Naive thymus-derived CD4-positive, alpha-beta T cell (primary cell): ENCODE measurements at regions of chr10 and their contacts with region 1.

Region 1: GRCh38 chr10:96586419-96587263 is at the start of gene TM9SF3:
- DNase-seq: peak; percentile 86 to 91 (median 89)
- ATAC-seq: peak; percentile 93
- H3K4me3 ChIP-seq: peak within 1 kb of the TSS; percentile 83
- H3K4me3 Mint-ChIP-seq: peak within 1 kb of the TSS in 8 of 10 donors; percentile 82 to 97 (median 92)
- H3K27ac ChIP-seq: peak within 1 kb of the TSS; percentile 100
- H3K27ac Mint-ChIP-seq: peak within 1 kb of the TSS in 8 of 9 donors; percentile 89 to 99 (median 95)
- H3K4me1 ChIP-seq: peaks cover 28 to 32% of the 10 kb centered on the region in 2 donors
- H3K4me1 Mint-ChIP-seq: peaks cover 26 to 47% (median 40%) of the 10 kb centered on the region in 7 donors
- H3K27me3 ChIP-seq: no peaks in the 10 kb centered on the region
- H3K27me3 Mint-ChIP-seq: peaks cover 0 to 13% (median 0%) of the 10 kb centered on the region in 5 donors
- total RNA-seq, gene TM9SF3: 76.7 to 94.0 (median 83.5) TPM

Region 2: DNA sequence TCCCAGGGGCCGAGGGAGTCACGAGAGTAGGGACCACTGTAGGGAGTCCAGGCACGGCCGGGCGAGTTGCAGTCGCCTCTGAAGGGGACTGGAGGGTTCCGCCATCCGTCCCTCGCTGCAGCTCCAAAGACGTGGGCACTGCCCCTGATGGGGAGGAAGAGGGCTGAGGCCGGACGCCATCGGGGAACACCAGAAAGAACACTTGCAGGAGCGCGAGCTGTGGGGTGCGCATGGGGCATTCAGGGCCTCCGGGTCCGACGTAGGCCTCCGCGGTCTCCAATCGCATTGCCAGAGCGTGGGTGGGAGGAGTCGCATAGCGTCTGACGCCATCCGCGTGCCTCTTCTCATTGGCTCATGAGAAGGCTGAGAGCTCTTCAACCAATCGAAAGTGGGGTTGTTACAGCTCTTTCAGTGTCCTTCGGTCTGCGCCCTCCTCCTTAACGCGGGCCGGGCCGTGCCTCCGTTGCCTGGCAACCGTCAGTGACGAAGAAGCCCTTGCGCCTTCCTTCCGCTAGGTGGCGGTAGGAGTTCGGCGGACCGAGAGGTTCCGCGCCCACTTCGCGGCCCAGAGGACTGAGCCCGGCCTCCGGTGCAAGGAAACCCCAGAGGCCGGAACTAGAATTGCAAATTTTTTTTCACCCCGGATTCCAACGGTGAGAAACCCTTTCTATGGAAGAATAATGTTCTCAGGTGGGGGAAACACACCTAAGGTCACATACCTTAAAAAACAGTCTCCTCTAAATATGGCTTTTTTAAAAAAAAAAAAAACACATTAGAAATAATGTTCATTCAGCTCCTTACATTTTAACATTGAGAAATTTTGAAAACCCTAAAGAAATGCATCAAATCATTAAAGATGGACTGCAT is 892.7 kb before region 1 on chr10 and contains the start of gene TCTN3:
- CTCF ChIA-PET with region 1: no interaction called
- POLR2A ChIA-PET with region 1: no interaction called
- intact Hi-C with region 1: loop called in 1 of 2 experiments (anchors 10 kb)
- DNase-seq: peak; percentile 85 to 98 (median 97)
- ATAC-seq: peak; percentile 98
- H3K4me3 ChIP-seq: peak within 1 kb of the TSS; percentile 93
- H3K4me3 Mint-ChIP-seq: peak within 1 kb of the TSS; percentile 89 to 99 (median 96)
- H3K27ac ChIP-seq: peak within 1 kb of the TSS; percentile 95
- H3K27ac Mint-ChIP-seq: peak within 1 kb of the TSS; percentile 91 to 98 (median 96)
- H3K4me1 ChIP-seq: peaks cover 11 to 15% of the 10 kb centered on the region in 2 donors
- H3K4me1 Mint-ChIP-seq: peaks cover 27 to 51% (median 42%) of the 10 kb centered on the region in 7 donors
- H3K27me3 ChIP-seq: no peaks in the 10 kb centered on the region
- H3K27me3 Mint-ChIP-seq: peaks cover 0 to 9% (median 2%) of the 10 kb centered on the region in 5 donors
- total RNA-seq, gene TCTN3: 16.2 to 38.3 (median 22.2) TPM

Region 3: DNA sequence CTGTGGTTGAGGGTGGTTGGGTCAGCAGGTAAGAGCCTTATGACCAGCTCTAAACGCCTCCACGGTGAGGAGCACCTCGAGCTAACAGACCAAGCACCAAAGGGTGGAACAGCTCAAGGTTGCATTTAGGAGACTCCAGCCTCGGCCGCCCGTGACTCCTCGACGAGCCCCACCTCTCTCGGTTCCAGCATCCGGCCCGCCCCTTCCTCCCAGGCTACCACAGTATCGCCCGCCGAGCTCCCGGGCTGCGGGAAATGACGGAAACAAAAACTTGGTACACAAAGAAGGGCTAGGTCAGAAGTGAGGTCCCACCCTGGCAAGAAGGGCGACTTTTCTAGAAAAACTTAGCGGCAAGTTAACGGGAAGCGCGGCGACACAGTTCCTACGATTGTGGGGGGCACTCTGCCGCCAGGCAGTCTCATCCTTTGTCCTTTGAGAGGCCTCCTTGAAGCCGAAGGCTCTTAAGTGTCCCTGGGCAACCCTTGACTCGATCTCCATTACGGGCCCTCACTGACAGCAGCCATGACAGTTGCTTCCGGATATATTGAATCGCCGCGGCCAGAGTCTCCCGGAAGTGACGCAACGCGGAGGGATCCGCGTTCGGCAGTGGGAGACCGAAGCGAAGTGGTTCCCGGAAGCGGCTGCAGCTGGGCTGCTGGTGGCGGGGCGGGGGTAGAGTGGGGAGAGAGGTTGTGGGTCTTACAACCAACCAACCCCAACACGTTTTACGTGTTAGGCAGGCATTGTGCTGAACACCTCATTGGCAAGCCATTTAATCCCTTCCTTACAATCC is 496.8 kb before region 1 on chr10:
- CTCF ChIA-PET with region 1: no interaction called
- POLR2A ChIA-PET with region 1: no interaction called
- intact Hi-C with region 1: loop called in 1 of 2 experiments (anchors 1 kb)
- DNase-seq: peak; percentile 87 to 94 (median 92)
- ATAC-seq: peak; percentile 94
- H3K4me3 ChIP-seq: peak overlapping the region; percentile 99
- H3K4me3 Mint-ChIP-seq: peak overlapping the region; percentile 87 to 98 (median 94)
- H3K27ac ChIP-seq: peak overlapping the region; percentile 93
- H3K27ac Mint-ChIP-seq: peak overlapping the region; percentile 96 to 99 (median 99)
- H3K4me1 ChIP-seq: peaks cover 4 to 8% of the 10 kb centered on the region in 2 donors
- H3K4me1 Mint-ChIP-seq: peaks cover 0 to 15% (median 14%) of the 10 kb centered on the region in 7 donors
- H3K27me3 ChIP-seq: peaks cover 3 to 4% of the 10 kb centered on the region in 2 donors
- H3K27me3 Mint-ChIP-seq: peaks cover 29 to 36% (median 30%) of the 10 kb centered on the region in 5 donors

Region 4: DNA sequence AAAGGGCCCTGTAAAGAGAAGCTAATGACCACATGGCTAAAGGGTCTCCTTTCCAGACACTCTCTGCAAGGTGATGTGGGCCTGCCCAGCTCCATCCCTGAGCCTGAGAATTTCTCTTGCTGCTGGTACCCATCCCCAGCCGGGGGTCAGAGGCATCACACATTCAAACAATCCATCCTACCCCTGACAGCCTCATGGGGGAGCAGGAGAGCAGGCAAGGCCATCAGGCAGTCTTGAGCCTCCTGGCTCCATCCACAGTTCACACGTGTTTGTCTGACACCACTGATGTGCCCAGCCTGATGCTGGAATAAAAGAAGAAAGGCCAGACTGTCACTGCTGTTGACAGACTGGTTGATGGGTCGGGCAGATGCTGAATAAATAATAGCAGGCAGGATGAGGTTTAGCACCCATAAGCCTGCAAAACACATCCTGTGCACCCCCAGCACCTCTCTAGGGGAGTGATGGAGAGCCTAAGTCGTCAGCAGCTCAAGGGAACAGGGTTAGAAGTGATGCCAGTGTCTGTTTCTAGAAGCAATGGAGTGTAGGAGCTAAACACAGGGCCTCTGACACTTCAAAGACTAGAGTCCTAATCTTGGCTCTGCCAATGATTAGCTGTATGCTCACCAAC is 116.4 kb before region 1 on chr10:
- CTCF ChIA-PET with region 1: no interaction called
- POLR2A ChIA-PET with region 1: no interaction called
- intact Hi-C with region 1: no loop called
- DNase-seq: peak in 3 of 9 donors; percentile 8 to 23 (median 10)
- ATAC-seq: peak; percentile 62
- H3K4me3 ChIP-seq: no peak overlapping the region
- H3K4me3 Mint-ChIP-seq: no peak overlapping the region
- H3K27ac ChIP-seq: no peak overlapping the region
- H3K27ac Mint-ChIP-seq: no peak overlapping the region
- H3K4me1 ChIP-seq: no peaks in the 10 kb centered on the region
- H3K4me1 Mint-ChIP-seq: peaks cover 0 to 1% (median 0%) of the 10 kb centered on the region in 7 donors
- H3K27me3 ChIP-seq: no peaks in the 10 kb centered on the region
- H3K27me3 Mint-ChIP-seq: peaks cover 13 to 27% (median 22%) of the 10 kb centered on the region in 5 donors

Region 5: GRCh38 chr10:96513698-96514561 is 72.7 kb before region 1 on chr10 and contains the start of gene TLL2:
- CTCF ChIA-PET with region 1: no interaction called
- POLR2A ChIA-PET with region 1: no interaction called
- intact Hi-C with region 1: loop called (anchors 2 kb)
- DNase-seq: peak; percentile 1 to 74 (median 33)
- ATAC-seq: peak; percentile 83
- H3K4me3 ChIP-seq: peak within 1 kb of the TSS; percentile 48
- H3K4me3 Mint-ChIP-seq: peak within 1 kb of the TSS; percentile 75 to 86 (median 80)
- H3K27ac ChIP-seq: no peak within 1 kb of the TSS
- H3K27ac Mint-ChIP-seq: peak within 1 kb of the TSS in 1 of 9 donors; percentile 37
- H3K4me1 ChIP-seq: peaks cover 0 to 9% of the 10 kb centered on the region in 2 donors
- H3K4me1 Mint-ChIP-seq: peaks cover 8 to 24% (median 18%) of the 10 kb centered on the region in 7 donors
- H3K27me3 ChIP-seq: peaks cover 0 to 6% of the 10 kb centered on the region in 2 donors
- H3K27me3 Mint-ChIP-seq: peaks cover 29 to 61% (median 36%) of the 10 kb centered on the region in 5 donors
- total RNA-seq, gene TLL2: 0.24 TPM in 1 of 5 experiments, not detected in the others

Region 6: GRCh38 chr10:96719850-96720421 is 133.3 kb after region 1 on chr10:
- CTCF ChIA-PET with region 1: no interaction called
- POLR2A ChIA-PET with region 1: interaction called, 3 read pairs
- intact Hi-C with region 1: loop called in 1 of 2 experiments (anchors 2 kb)
- DNase-seq: peak in 5 of 9 donors; percentile 2 to 52 (median 15)
- ATAC-seq: peak; percentile 77
- H3K4me3 ChIP-seq: peak overlapping the region; percentile 58
- H3K4me3 Mint-ChIP-seq: peak overlapping the region; percentile 84 to 98 (median 92)
- H3K27ac ChIP-seq: no peak overlapping the region
- H3K27ac Mint-ChIP-seq: peak overlapping the region in 7 of 9 donors; percentile 20 to 77 (median 69)
- H3K4me1 ChIP-seq: peaks cover 6 to 20% of the 10 kb centered on the region in 2 donors
- H3K4me1 Mint-ChIP-seq: peaks cover 17 to 35% (median 26%) of the 10 kb centered on the region in 7 donors
- H3K27me3 ChIP-seq: no peaks in the 10 kb centered on the region
- H3K27me3 Mint-ChIP-seq: peaks cover 0 to 24% (median 4%) of the 10 kb centered on the region in 5 donors

Region 7: DNA sequence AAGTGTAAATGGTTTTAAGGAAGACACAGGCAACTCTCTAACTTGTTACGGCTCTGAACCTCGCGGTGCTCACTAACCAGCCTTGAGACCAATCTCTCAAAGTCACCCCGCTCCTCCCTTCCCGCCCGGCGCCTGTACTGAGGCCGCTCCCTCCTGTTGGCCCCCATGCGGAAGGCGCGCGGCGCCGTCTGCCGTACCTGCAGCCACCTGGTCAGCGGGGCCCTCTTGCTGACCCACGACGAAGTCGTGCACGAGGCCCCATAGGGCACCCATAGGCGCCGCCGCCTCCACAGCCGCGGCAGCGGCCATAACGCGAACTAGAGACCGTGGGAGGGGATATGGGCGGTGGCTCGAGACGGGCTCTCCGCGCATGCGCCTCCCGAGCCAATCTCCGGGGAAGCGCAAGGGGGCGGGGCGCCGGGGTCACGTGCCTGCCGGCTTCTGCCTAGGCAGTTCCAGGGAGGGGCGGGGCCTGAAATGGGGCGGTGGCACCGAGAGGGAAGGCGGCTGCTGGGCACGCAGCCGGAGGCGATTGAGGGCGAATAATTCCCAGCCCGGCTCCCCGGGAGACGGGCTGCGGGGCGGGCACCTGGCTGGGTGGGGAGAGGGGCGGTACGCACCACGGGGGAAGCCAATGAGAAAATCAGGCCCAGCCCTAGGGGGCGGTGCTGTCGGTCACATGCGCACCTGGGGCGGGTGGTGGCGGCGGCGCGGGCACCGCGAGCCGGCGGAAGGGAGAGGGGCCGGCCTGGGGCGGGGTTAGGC is 911.6 kb after region 1 on chr10 and contains the start of gene MMS19:
- CTCF ChIA-PET with region 1: no interaction called
- POLR2A ChIA-PET with region 1: no interaction called
- intact Hi-C with region 1: loop called in 1 of 2 experiments (anchors 2 kb)
- DNase-seq: peak; percentile 99 to 100 (median 100)
- ATAC-seq: peak; percentile 89
- H3K4me3 ChIP-seq: peak within 1 kb of the TSS; percentile 96
- H3K4me3 Mint-ChIP-seq: peak within 1 kb of the TSS; percentile 85 to 99 (median 98)
- H3K27ac ChIP-seq: peak within 1 kb of the TSS; percentile 81
- H3K27ac Mint-ChIP-seq: peak within 1 kb of the TSS; percentile 94 to 98 (median 97)
- H3K4me1 ChIP-seq: peaks cover 20 to 41% of the 10 kb centered on the region in 2 donors
- H3K4me1 Mint-ChIP-seq: peaks cover 28 to 65% (median 49%) of the 10 kb centered on the region in 7 donors
- H3K27me3 ChIP-seq: no peaks in the 10 kb centered on the region
- H3K27me3 Mint-ChIP-seq: peaks cover 0 to 34% (median 21%) of the 10 kb centered on the region in 5 donors
- total RNA-seq, gene MMS19: 68.7 to 113 (median 87.9) TPM